ENCODE measurements at regions of chr17 and their contacts with region 1.

Region 1: DNA sequence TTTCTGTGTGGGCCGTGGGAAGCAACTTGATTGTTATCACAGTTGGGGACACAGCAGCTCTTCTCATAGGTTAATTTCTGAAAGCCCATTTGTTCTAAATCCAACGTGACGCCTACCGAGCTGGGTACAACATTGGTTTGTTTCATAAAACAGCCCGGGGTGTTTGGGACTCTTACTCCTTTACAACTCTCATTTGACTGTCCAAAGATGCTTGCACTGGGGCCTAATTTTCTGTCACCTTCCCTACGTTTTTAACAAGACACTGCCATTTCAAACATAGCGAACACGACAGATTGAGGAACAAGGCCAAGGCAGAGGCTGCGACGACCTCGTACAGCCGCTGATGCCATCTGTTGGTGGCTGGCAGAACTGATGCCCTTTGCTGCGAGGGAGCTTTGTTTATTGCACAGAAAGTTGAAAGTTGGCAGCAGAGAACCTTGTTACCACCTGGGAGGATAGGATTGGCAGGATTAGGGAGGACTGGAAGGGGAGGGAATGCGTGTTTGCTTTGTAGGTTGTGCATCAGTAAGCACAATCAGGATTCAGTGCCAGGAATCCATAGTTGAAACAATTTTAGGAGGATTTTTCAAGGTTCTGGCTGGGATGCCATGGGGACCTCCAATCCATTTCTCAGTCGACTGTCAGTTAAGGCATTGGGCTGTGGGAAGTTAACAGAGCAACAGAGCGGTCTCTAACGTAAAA is 98.3 kb downstream of the PITPNC1 start:
- DNase-seq: peak; percentile 93
- H3K4me3 ChIP-seq: no peak overlapping the region
- H3K27ac ChIP-seq: peak overlapping the region; percentile 54 to 77 (median 68)
- H3K4me1 ChIP-seq: peaks cover 30 to 59% (median 52%) of the 10 kb centered on the region in 4 donors
- H3K27me3 ChIP-seq: no peaks in the 10 kb centered on the region
- CTCF ChIP-seq: peak in 2 of 3 experiments; percentile 89 to 94
- EP300 ChIP-seq: no peak
- POLR2A ChIP-seq: no peak

Region 2: DNA sequence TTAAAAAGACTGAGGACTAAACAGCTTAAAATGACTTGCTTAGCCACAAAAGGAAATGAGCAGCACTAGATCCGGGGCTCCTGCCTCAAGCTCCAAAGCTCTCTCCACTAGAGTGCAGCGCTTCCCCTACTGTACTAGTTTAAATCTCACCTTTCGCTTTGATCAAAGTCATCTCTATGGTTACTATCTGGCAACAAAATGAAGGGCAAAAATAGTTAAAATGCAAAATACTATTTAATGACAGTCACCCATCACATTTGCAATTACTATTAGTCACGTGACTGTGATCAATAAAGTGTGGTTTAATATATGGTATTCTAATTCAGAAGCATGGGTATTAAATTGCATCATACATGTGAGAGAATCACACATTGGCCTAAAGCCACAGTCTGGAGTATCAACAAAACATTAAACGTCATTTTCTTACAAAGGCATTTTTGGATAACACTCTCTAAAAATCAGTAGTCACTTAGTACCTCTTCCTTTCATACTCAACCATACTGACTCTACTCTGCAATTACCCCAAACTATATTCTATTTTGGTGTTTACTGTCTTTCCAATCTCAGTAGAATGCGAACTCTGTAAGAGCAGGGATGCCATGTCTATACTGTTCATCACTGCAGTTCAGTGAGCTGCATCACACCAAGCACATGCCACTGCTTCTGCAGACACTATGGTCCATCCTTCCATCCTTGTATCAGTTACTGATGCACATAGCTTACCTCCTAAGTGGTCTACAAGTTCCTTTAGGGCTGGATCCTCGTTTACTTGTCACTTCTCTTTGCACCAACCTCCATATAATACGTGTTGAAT is 115.2 kb before region 1 on chr17:
- intact Hi-C with region 1: no loop called
- DNase-seq: no peak
- H3K4me3 ChIP-seq: no peak overlapping the region
- H3K27ac ChIP-seq: peak overlapping the region in 1 of 4 donors; percentile 41
- H3K4me1 ChIP-seq: peaks cover 62 to 77% (median 68%) of the 10 kb centered on the region in 4 donors
- H3K27me3 ChIP-seq: no peaks in the 10 kb centered on the region
- CTCF ChIP-seq: peak in 2 of 3 experiments; percentile 10 to 20
- EP300 ChIP-seq: no peak
- POLR2A ChIP-seq: no peak

Region 3: GRCh38 chr17:67378454-67379250 is 96.7 kb before region 1 on chr17:
- intact Hi-C with region 1: loop called (anchors 2 kb)
- DNase-seq: peak; percentile 96
- H3K4me3 ChIP-seq: peak overlapping the region; percentile 81 to 93 (median 90)
- H3K27ac ChIP-seq: peak overlapping the region; percentile 91 to 96 (median 95)
- H3K4me1 ChIP-seq: peaks cover 18 to 50% (median 42%) of the 10 kb centered on the region in 4 donors
- H3K27me3 ChIP-seq: no peaks in the 10 kb centered on the region
- CTCF ChIP-seq: peak; percentile 76 to 92 (median 85)
- EP300 ChIP-seq: no peak
- POLR2A ChIP-seq: no peak

Region 4: GRCh38 chr17:67629971-67630320 is 154.6 kb after region 1 on chr17:
- intact Hi-C with region 1: loop called (anchors 10 kb)
- DNase-seq: no peak
- H3K4me3 ChIP-seq: no peak overlapping the region
- H3K27ac ChIP-seq: peak overlapping the region; percentile 5 to 60 (median 40)
- H3K4me1 ChIP-seq: peaks cover 4 to 32% (median 22%) of the 10 kb centered on the region in 4 donors
- H3K27me3 ChIP-seq: no peaks in the 10 kb centered on the region
- CTCF ChIP-seq: peak; percentile 34 to 48 (median 39)
- EP300 ChIP-seq: no peak
- POLR2A ChIP-seq: no peak